ENCODE measurements at regions of chr20 and their contacts with region 1.

Region 1: GRCh38 chr20:36605399-36606157 is at the start of gene RAB5IF:
- DNase-seq: peak; percentile 95 to 99 (median 97)

Region 2: DNA sequence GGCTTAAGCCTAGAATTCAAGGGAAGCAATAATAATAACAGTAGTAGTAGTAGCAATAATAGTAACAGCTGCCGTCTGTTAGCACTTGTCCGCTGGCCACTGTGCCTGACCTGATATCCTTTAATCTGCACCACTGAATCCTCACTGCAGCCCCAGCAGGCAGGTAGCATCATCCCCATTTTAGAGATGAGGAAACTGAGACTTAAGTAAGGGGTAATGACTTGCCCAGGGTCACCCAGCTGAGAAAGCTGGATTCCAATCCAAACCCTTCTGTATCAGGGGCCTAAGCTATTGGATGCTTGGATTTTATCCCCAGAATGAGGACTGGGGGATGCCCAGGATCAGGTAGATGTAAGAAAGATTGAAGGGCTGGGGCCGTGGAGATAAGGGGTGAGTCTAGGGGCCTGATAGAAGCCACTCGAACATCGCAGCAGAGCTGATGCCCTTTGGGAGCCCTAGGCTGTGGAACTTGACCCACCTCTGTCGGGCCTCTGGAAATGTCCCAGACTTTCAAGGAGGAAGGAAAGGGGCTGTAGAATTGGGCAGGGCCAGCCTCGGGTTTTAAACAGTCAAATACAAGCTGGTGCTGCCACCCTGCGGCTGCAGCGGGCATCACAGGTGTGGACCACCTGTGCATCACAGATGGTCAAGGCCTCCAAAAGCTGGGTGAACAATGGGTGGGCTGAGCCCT is 166.4 kb before region 1 on chr20:
- intact Hi-C with region 1: no loop called
- DNase-seq: peak; percentile 53 to 95 (median 79)

Region 3: GRCh38 chr20:36460648-36461599 is 144.7 kb before region 1 on chr20:
- intact Hi-C with region 1: loop called (anchors 10 kb)
- DNase-seq: peak; percentile 74 to 97 (median 86)

Region 4: DNA sequence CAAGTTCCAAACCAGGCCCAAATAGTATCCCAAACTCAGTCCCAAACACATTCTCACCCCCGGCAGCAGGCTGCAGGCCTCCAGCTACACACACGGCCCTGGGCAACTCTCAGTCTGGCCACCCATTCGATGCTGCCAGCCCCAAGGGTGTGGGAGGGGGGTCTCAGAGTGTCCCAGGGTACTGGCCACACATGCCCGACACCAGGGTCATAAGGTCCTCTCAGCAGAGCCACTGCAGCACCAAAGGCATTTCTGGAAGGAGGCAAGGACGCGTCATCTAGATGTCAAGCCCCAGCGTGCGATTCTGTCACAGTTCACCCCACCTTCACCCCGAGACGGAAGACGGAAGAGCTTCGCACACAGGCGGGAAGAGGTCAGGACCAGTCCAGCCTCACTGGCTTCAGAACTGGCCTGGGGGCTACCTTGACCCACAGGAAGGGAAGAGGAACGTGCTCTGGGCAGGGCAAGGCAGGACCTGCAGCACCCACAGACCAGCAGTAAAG is 54.7 kb before region 1 on chr20:
- intact Hi-C with region 1: loop called (anchors 1 kb)
- DNase-seq: peak in 2 of 10 donors; percentile 37 to 43

Region 5: GRCh38 chr20:36717657-36718056 is 112.1 kb after region 1 on chr20:
- intact Hi-C with region 1: no loop called
- DNase-seq: peak in 3 of 10 donors; percentile 16 to 31 (median 27)

Region 6: GRCh38 chr20:36754656-36755222 is 149.2 kb after region 1 on chr20:
- intact Hi-C with region 1: loop called (anchors 5 kb)
- DNase-seq: peak in 4 of 10 donors; percentile 23 to 53 (median 50)

Region 7: GRCh38 chr20:37095108-37095598 is 489.6 kb after region 1 on chr20:
- intact Hi-C with region 1: no loop called
- DNase-seq: peak in 1 of 10 donors; percentile 79